Esophagus squamous epithelium (tissue), 5 donors: ENCODE measurements at regions of chr2 and their contacts with region 1.

Region 1: DNA sequence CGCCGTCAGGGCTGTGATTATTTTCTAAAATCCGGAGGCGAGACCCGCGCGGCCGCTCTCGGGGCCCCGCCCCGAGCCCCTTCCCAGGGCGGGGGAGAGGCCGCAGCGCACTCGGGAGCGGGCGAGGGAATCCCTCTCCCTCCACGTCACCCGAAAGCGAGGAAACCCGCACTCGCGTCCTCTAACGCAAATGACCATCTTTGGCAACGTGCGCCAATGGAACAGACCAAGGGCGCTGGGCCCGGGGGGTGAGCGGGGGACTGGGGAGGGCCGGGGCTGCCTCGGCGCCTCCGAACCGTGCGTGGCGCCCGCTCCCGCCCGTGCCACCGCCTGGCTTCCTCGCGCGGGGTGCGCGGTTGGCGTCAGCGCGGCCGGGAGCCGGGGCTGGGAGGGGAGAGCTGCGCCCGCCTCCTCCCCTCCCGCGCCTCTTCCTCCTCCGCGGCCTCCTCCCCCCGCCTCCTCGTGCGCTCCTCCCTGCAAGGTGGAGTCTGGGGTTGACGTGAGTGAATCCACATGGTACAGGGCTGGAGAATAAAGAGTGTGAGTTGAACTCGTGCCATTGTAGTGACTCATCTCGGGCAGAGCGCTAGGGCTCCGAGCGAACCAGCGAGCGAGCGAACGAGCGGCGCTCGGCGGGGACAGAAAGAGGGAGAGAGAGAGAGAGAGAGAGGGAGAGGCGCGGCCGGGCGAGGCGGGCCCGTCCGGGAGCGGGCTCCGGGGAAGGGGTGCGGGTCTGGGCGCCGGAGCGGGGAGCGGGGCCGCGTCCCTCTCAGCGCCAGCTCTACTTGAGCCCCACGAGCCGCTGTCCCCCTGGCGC is at the start of gene FOSL2:
- DNase-seq: peak; percentile 87
- H3K4me3 ChIP-seq: peak within 1 kb of the TSS; percentile 84 to 98 (median 97)
- H3K27ac ChIP-seq: peak within 1 kb of the TSS; percentile 100
- H3K4me1 ChIP-seq: peaks cover 11 to 39% (median 20%) of the 10 kb centered on the region in 3 donors
- H3K27me3 ChIP-seq: no peaks in the 10 kb centered on the region
- CTCF ChIP-seq: peak in 1 of 6 experiments; percentile 10
- POLR2A ChIP-seq: peak in 3 of 4 donors; percentile 92 to 99 (median 99)
- total RNA-seq, gene FOSL2: 100 to 234 (median 144) TPM

Region 2: GRCh38 chr2:27715318-27716210 is 676.9 kb before region 1 on chr2:
- intact Hi-C with region 1: loop called (anchors 10 kb)
- DNase-seq: no peak
- H3K4me3 ChIP-seq: peak overlapping the region; percentile 21 to 69 (median 46)
- H3K27ac ChIP-seq: peak overlapping the region; percentile 54 to 74 (median 65)
- H3K4me1 ChIP-seq: peaks cover 17 to 64% (median 29%) of the 10 kb centered on the region in 3 donors
- H3K27me3 ChIP-seq: peaks cover 0 to 8% (median 0%) of the 10 kb centered on the region in 4 donors
- CTCF ChIP-seq: no peak
- POLR2A ChIP-seq: peak in 1 of 4 donors; percentile 36

Region 3: DNA sequence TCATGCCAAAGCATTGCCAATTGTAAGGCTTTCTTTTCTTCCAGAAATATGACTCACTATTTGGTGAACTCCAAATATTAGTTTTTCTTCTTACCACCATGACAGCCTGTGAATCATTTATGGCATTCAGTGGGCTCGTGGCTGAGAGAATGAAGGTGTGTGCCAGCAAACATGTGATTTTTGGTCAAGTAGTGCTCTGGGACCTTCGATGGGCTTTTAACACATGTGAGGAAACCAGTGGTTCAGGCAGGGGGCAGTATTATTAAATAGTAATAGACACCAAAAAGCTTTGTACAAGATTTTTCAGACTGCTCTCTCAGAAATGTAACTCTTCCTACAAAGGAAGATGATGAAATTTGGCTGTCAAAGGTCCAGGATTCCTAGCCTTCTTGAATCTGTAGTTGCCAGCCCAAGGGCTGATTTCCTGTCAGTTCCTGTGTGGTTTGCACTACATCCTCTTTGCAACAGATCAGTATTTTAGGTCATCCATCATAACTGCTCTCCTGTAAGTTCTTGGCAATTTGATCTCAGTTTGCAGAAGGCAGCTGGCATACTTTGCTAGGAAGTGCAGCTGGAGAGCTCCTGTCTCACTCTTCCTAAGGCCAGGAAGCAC is 437.6 kb before region 1 on chr2:
- intact Hi-C with region 1: loop called (anchors 10 kb)
- DNase-seq: peak; percentile 2
- H3K4me3 ChIP-seq: no peak overlapping the region
- H3K27ac ChIP-seq: peak overlapping the region; percentile 41 to 79 (median 70)
- H3K4me1 ChIP-seq: peaks cover 16 to 65% (median 33%) of the 10 kb centered on the region in 3 donors
- H3K27me3 ChIP-seq: no peaks in the 10 kb centered on the region
- CTCF ChIP-seq: peak in 4 of 6 experiments; percentile 27 to 34 (median 30)
- POLR2A ChIP-seq: no peak

Region 4: DNA sequence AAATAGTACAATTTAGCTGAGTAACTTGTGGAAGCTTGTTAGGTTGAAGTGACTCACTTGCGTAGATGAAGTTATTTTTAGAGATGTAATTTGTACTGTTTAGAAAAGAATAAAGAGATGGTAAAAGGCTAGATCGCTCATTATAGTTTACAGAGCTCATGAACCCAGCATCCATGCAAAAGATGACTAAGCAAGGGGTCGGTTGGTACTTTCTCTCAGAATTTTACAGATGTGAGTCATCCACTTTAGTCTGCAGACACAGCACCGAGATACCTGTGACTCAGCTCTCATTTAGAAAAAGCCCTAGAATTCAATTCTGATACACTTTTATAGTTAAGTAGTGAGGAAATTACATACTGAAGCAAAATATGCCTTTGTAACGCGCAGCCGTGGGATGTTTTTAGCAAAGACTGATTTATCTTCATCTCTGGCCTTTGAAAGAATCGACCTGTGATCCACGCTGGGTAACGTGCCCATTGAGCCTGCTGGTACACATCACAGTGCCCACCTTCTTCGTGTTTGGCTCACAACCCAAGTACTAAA is 116.4 kb before region 1 on chr2:
- intact Hi-C with region 1: loop called (anchors 5 kb)
- DNase-seq: no peak
- H3K4me3 ChIP-seq: no peak overlapping the region
- H3K27ac ChIP-seq: peak overlapping the region; percentile 78 to 93 (median 90)
- H3K4me1 ChIP-seq: peaks cover 22 to 92% (median 41%) of the 10 kb centered on the region in 3 donors
- H3K27me3 ChIP-seq: no peaks in the 10 kb centered on the region
- CTCF ChIP-seq: no peak
- POLR2A ChIP-seq: no peak

Region 5: GRCh38 chr2:28558158-28558820 is 165.8 kb after region 1 on chr2:
- intact Hi-C with region 1: no loop called
- DNase-seq: no peak
- H3K4me3 ChIP-seq: no peak overlapping the region
- H3K27ac ChIP-seq: no peak overlapping the region
- H3K4me1 ChIP-seq: peaks cover 0 to 5% (median 0%) of the 10 kb centered on the region in 3 donors
- H3K27me3 ChIP-seq: no peaks in the 10 kb centered on the region
- CTCF ChIP-seq: no peak
- POLR2A ChIP-seq: no peak